Esophagus squamous epithelium (tissue), 5 donors: ENCODE measurements at regions of chr9 and their contacts with region 1.

Region 1: GRCh38 chr9:120936011-120936763 is 9.6 kb upstream of the TRAF1 start:
- DNase-seq: peak; percentile 45
- H3K4me3 ChIP-seq: peak overlapping the region in 2 of 4 donors; percentile 18 to 44
- H3K27ac ChIP-seq: peak overlapping the region; percentile 72 to 95 (median 92)
- H3K4me1 ChIP-seq: peaks cover 24 to 85% (median 59%) of the 10 kb centered on the region in 3 donors
- H3K27me3 ChIP-seq: no peaks in the 10 kb centered on the region
- CTCF ChIP-seq: peak; percentile 89 to 95 (median 91)
- POLR2A ChIP-seq: no peak

Region 2: GRCh38 chr9:120755827-120756434 is 180.3 kb before region 1 on chr9:
- intact Hi-C with region 1: loop called (anchors 5 kb)
- DNase-seq: no peak
- H3K4me3 ChIP-seq: no peak overlapping the region
- H3K27ac ChIP-seq: peak overlapping the region in 1 of 4 donors; percentile 5
- H3K4me1 ChIP-seq: peaks cover 0 to 8% (median 0%) of the 10 kb centered on the region in 3 donors
- H3K27me3 ChIP-seq: no peaks in the 10 kb centered on the region
- CTCF ChIP-seq: peak; percentile 90 to 91 (median 90)
- POLR2A ChIP-seq: no peak

Region 3: DNA sequence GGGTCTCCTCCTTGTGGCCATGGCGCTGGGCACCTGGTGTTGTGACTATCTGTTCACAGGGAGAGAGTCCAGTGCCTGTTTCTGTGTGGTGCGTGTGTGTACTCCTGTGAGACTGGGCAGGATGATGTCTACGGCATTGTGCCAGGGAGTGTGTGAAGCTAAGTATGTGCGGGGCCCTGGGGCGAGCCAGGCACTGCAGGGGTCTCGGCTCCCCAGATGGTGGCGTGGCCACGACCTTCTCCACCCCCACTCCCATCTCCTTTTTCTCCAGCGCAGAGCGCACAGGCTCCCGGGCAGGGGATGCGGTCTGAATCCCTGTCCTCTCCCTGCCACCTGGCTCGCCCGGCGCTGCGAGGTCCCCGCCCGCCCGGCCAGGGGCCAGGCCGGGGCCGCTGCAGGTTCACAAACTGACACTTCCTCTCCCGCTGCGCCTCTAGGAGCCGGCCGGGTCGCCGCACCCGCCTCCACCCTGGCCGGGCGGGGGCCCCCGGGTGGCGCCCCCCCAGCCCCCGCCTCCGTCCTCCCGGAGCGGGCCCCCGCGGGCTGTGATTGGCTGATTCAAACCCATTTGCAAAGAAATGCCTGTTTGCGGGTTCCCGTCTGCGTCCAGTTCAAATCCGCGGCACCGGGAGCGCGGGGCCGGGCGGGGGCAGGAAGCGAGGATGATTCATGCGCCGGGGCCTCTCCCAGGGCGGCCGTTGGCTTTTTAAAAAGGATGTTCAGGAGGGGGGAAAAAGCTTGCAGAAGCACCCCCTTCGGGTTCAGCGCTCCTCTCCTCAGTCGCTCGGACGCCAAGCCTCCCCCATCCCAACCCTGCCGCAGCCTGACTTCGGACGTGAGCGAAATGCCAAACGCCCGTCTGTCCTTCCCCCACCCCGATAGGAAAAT is 60.0 kb before region 1 on chr9:
- intact Hi-C with region 1: loop called (anchors 5 kb)
- DNase-seq: no peak
- H3K4me3 ChIP-seq: peak overlapping the region; percentile 74 to 87 (median 80)
- H3K27ac ChIP-seq: peak overlapping the region; percentile 97 to 100 (median 98)
- H3K4me1 ChIP-seq: peaks cover 13 to 54% (median 20%) of the 10 kb centered on the region in 3 donors
- H3K27me3 ChIP-seq: no peaks in the 10 kb centered on the region
- CTCF ChIP-seq: no peak
- POLR2A ChIP-seq: peak in 3 of 4 donors; percentile 24 to 65 (median 47)